Spleen (tissue), 13 donors: ENCODE measurements at regions of chrX and their contacts with region 1.

Region 1: DNA sequence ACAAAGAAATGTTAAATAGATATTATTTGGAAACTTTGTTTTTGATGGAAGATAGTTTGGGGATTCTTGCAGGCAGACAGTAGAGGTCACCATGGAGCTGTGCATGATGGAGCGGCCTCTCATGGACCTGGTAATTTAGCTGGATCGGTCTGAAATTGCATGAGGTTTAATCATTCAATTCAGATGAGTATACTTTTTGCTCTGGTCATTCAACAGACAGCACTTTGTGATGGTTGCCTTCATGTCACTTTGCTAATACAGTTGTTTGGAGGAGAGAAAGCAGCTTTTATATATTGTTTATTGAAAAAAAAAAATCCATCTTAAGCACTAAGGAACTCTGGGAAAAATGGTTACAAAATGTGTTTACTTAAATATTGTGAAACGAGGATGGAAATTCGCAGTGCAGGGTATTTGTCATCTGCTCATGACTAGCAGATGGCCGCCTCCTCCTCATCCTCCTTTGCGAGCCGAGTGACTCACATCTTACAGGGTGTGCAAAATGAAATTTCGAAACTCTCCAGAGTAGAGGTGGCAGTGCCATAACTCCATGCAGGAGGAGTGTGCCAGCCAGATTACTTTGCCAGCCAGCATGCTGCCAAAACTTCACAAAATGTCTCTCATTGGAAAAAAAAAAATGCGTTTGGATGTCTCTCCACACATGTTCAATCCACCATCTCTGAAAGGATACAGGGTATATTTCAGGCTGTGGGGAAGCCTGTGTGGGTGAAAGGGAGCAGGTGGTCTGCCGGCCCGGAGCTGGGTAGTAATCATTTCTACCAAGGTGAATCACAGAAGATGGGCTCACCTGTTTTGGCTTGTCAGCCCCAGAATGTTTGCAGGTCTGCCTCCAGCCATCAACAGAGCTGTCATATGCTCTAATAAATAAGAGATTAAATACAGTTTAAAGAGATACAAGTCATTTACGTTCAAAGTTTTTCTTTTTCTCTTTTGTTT is 314.9 kb upstream of the DIPK2B start:
- DNase-seq: no peak
- H3K4me3 ChIP-seq: no peak overlapping the region
- H3K27ac ChIP-seq: no peak overlapping the region
- H3K4me1 ChIP-seq: no peaks in the 10 kb centered on the region
- H3K27me3 ChIP-seq: peaks cover 0 to 10% (median 0%) of the 10 kb centered on the region in 7 donors
- CTCF ChIP-seq: peak in 8 of 11 experiments; percentile 23 to 55 (median 45)
- POLR2A ChIP-seq: no peak

Region 2: DNA sequence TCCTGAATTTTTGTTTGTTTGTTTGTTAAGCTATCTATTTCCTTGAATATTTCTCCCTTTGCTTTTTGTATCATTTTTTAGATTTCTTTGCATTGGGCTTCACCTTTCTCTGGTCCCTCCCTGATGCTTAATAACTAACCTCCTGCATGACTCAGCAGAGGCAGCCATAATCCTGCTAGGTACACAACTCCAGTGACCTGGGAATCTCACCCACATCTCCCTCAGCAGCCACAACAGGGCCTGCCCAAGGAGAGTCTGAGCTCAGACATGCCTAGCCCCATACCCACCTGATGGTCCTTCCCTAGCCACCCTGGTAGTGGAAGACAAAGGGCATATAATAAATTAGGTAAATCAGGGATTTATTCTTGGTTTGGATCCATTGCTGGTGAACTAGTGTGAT is 45.2 kb before region 1 on chrX:
- intact Hi-C with region 1: no loop called
- DNase-seq: no peak
- H3K4me3 ChIP-seq: no peak overlapping the region
- H3K27ac ChIP-seq: no peak overlapping the region
- H3K4me1 ChIP-seq: no peaks in the 10 kb centered on the region
- H3K27me3 ChIP-seq: no peaks in the 10 kb centered on the region
- CTCF ChIP-seq: no peak
- POLR2A ChIP-seq: no peak

Region 3: DNA sequence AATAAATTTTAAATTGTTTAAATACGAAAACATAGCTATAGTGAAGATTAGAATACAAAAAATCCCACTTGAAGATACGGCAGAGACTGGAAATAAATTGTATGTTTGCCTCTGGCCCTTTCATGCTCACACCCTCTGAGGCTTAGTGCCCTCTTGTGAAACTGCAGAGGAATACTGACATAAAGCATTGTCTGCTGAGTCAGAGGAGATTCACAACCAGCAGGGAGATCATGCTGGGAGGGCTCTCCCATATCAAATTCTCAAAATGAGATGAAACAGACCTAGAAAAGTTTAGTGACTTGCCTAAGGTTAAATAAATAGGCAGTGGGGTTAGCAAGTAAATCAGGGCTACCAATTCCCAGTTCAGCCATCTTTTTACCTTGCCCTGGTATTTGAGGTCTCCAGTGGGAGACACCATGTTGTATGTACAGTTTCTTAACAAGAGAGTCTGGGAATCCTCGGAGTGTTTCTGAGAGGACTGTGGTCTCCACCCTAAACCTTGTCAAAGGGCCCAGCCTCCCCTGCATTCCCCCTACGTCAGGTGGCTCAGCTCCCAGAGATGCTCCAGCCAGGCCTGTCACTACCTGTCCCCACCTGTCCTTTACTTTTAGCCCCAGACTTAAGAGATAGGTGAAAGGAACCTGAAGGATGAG is 266.5 kb after region 1 on chrX:
- intact Hi-C with region 1: loop called (anchors 10 kb)
- DNase-seq: no peak
- H3K4me3 ChIP-seq: no peak overlapping the region
- H3K27ac ChIP-seq: no peak overlapping the region
- H3K4me1 ChIP-seq: peaks cover 0 to 6% (median 0%) of the 10 kb centered on the region in 6 donors
- H3K27me3 ChIP-seq: no peaks in the 10 kb centered on the region
- CTCF ChIP-seq: peak in 1 of 11 experiments; percentile 13
- POLR2A ChIP-seq: no peak

Region 4: GRCh38 chrX:46376246-46376885 is 860.8 kb after region 1 on chrX:
- intact Hi-C with region 1: loop called (anchors 10 kb)
- DNase-seq: no peak
- H3K4me3 ChIP-seq: no peak overlapping the region
- H3K27ac ChIP-seq: no peak overlapping the region
- H3K4me1 ChIP-seq: no peaks in the 10 kb centered on the region
- H3K27me3 ChIP-seq: no peaks in the 10 kb centered on the region
- CTCF ChIP-seq: peak in 2 of 11 experiments; percentile 17 to 23
- POLR2A ChIP-seq: no peak